HCT116 (cell line): ENCODE measurements at regions of chr6 and their contacts with region 1.

Region 1: DNA sequence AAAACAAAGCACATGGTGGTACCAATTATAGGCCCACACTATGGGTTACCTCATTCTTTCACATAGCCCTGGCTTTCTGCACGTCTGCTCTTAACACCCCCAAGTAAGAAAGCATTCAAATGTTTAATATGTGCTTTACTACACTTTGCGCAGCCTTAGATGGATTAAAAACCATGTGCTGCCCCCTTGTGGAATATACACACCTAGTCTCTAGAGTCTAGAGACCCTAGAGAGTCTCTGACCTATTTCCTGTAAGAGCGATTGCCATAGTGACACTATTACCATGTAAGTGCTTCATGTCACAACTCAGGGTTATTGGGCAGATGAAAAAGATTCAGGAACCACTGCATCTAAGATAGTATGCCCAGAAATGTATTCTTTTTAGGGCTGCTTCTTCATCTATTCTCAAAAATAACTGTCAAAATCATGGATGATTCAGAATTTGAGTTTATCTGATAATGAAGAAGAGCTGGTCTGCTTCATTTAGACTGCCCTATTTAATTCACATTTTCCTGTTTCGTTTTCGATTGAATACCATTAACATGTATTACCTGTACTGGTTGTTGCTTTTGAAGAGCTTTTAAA is 186.3 kb downstream of the ADGB start:
- DNase-seq: peak; percentile 56
- ATAC-seq: peak; percentile 100
- H3K4me3 ChIP-seq: no peak overlapping the region
- H3K27ac ChIP-seq: no peak overlapping the region
- H3K4me1 ChIP-seq: no peaks in the 10 kb centered on the region
- H3K27me3 ChIP-seq: no peaks in the 10 kb centered on the region
- CTCF ChIP-seq: peak; percentile 35 to 75 (median 60); a peak in 5 of 6 replicates
- POLR2A ChIP-seq: no peak
- RAD21 ChIP-seq: peak; percentile 60

Region 2: DNA sequence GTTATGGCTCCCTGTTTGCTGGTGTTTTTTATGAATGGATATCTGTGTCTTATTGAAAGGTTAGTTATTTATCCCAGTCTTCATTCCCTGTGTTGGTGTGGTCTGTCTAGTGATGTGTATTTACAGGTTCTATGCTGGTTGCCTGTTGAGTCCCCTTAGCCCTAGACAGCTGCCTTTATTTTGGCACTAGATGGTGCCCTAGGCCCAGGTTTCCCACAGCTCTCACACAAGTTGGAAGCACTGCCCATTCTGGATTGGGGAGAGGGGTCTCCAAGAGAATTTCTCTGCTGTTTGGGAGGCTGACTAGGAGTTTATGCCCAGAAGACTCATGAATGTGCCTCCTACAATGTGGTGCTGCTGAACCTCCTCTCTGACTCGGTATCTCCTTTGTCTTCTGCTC is 743.8 kb before region 1 on chr6:
- CTCF ChIA-PET with region 1: interaction called, 8 read pairs
- POLR2A ChIA-PET with region 1: no interaction called
- RAD21 ChIA-PET with region 1: no interaction called
- intact Hi-C with region 1: loop called (anchors 2 kb)
- DNase-seq: peak; percentile 18
- ATAC-seq: peak; percentile 85
- H3K4me3 ChIP-seq: no peak overlapping the region
- H3K27ac ChIP-seq: no peak overlapping the region
- H3K4me1 ChIP-seq: no peaks in the 10 kb centered on the region
- H3K27me3 ChIP-seq: 0 out of 2 replicates have a peak, but pooled peaks cover 7% of the 10 kb centered on the region
- CTCF ChIP-seq: peak; percentile 49 to 55 (median 52); a peak in 5 of 6 replicates
- POLR2A ChIP-seq: no peak
- RAD21 ChIP-seq: peak; percentile 77

Region 3: DNA sequence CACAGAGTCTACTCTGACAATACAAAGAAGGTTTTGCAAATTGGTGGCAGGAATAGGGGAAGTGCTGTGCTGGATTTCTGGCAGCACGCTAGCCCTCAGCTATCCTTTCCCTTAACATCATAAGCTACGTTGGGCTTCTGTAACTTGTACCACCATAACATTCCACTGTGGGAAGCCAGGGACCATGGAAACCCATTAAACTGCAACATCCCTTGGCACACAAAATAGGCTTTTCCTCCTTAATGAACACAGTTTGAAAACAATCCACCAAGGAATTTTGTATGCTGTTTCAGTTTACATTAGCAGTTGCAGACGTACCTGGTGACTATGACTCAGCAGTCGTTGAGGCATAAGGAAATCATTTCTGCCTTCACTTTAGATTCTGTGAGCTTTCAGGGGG is 445.4 kb before region 1 on chr6:
- CTCF ChIA-PET with region 1: no interaction called
- POLR2A ChIA-PET with region 1: no interaction called
- RAD21 ChIA-PET with region 1: no interaction called
- intact Hi-C with region 1: no loop called
- DNase-seq: no peak
- ATAC-seq: no peak
- H3K4me3 ChIP-seq: no peak overlapping the region
- H3K27ac ChIP-seq: no peak overlapping the region
- H3K4me1 ChIP-seq: no peaks in the 10 kb centered on the region
- H3K27me3 ChIP-seq: no peaks in the 10 kb centered on the region
- CTCF ChIP-seq: no peak
- POLR2A ChIP-seq: no peak
- RAD21 ChIP-seq: no peak